Activated naive CD4-positive, alpha-beta T cell treated with anti-CD3 and anti-CD28 coated beads, Interleukin-2, amount 10 ng/mL, durations not matched to agents 7 days and 5 days (primary cell): ENCODE measurements at regions of chr7 and their contacts with region 1.

Region 1: DNA sequence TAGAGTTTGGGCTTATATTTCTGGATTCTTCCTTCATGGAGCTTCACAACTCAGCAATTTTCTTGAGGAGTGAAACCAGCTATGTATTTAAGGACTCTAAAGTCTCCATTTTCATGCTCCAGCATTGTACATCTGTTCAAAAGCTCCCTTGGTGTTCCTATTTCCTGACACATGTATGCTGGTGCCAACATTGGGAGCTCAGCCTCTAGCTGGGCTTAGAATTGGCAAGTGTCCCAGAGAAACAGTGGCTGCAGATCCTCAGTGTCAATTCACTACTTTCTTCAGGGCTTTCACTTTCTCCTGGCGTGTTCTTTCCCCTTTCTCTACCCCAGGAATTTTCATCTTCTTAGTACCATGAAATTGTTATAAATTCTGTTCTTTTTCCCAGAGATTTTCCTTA is 103.1 kb downstream of the ZNF467 start:
- DNase-seq: no peak
- H3K4me3 Mint-ChIP-seq: no peak overlapping the region
- H3K27ac Mint-ChIP-seq: no peak overlapping the region
- H3K4me1 Mint-ChIP-seq: peaks cover 2% of the 10 kb centered on the region
- H3K27me3 Mint-ChIP-seq: peaks cover 58% of the 10 kb centered on the region

Region 2: DNA sequence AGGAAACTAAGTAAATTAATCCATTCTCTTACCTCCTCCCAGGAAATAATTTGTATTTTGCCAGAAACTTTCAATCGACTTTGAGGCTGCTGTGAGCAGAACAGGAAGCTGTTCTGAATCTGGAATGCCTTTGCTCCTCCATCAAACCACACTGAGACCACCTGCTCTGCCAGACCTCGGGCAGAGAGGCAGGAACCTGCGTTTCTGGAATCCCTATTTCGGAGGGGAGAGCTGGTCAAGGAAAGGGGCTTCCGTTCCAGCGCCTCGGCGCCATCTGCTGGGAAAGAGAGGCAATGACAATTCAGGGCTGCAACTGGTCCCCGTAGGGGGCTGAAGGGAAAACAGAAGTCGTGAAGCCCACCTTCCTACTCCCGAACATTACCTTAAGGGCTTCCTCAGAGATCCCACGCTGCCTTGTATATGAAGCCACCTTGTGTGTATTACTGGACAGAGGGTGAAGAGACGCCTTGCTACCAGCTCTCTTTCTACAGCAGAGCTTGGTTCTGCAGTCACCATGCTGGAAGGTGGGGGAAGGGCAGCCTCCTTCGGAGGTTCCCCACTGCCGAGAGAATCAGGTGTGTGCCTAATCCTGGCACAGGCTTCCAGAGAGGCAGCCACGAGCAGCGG is 71.9 kb after region 1 on chr7:
- CTCF ChIA-PET with region 1: interaction called, 111 read pairs
- DNase-seq: peak; percentile 69
- H3K4me3 Mint-ChIP-seq: peak overlapping the region; percentile 30
- H3K27ac Mint-ChIP-seq: no peak overlapping the region
- H3K4me1 Mint-ChIP-seq: peaks cover 10% of the 10 kb centered on the region
- H3K27me3 Mint-ChIP-seq: peaks cover 82% of the 10 kb centered on the region